Transverse colon (tissue), 4 donors: ENCODE measurements at regions of chr7 and their contacts with region 1.

Region 1: GRCh38 chr7:147510923-147511322 is 1079.6 kb upstream of the C7orf33 start:
- DNase-seq: no peak
- H3K4me3 ChIP-seq: no peak overlapping the region
- H3K27ac ChIP-seq: no peak overlapping the region
- H3K4me1 ChIP-seq: no peaks in the 10 kb centered on the region
- H3K27me3 ChIP-seq: no peaks in the 10 kb centered on the region
- CTCF ChIP-seq: no peak
- EP300 ChIP-seq: no peak
- POLR2A ChIP-seq: no peak

Region 2: GRCh38 chr7:147207988-147208387 is 302.9 kb before region 1 on chr7:
- in situ Hi-C with region 1: no loop called
- intact Hi-C with region 1: no loop called
- DNase-seq: no peak
- H3K4me3 ChIP-seq: no peak overlapping the region
- H3K27ac ChIP-seq: no peak overlapping the region
- H3K4me1 ChIP-seq: no peaks in the 10 kb centered on the region
- H3K27me3 ChIP-seq: no peaks in the 10 kb centered on the region
- CTCF ChIP-seq: no peak
- EP300 ChIP-seq: no peak
- POLR2A ChIP-seq: no peak

Region 3: DNA sequence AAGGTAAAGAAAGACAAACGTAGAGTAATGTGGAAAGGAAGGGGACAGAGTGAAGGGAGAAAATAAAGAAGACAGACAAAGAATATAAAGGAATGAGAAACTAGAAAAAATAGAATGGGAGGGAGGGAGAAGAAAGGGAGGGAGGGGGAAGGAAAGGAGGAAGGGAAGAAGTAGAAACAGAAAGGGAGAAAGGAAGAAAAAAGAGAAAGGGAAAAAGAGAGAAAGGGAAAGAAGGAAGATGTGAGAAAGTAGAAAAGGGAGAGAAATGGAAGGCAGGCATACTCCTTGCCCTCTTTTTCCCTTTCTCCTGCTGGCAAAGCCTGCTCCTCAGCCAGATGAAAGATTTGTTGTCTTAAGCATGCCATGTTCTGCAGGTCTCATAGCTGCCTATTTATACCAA is 58.1 kb before region 1 on chr7:
- in situ Hi-C with region 1: loop called in 1 of 4 experiments (anchors 10 kb)
- intact Hi-C with region 1: no loop called
- DNase-seq: no peak
- H3K4me3 ChIP-seq: no peak overlapping the region
- H3K27ac ChIP-seq: no peak overlapping the region
- H3K4me1 ChIP-seq: no peaks in the 10 kb centered on the region
- H3K27me3 ChIP-seq: no peaks in the 10 kb centered on the region
- CTCF ChIP-seq: no peak
- EP300 ChIP-seq: no peak
- POLR2A ChIP-seq: no peak

Region 4: DNA sequence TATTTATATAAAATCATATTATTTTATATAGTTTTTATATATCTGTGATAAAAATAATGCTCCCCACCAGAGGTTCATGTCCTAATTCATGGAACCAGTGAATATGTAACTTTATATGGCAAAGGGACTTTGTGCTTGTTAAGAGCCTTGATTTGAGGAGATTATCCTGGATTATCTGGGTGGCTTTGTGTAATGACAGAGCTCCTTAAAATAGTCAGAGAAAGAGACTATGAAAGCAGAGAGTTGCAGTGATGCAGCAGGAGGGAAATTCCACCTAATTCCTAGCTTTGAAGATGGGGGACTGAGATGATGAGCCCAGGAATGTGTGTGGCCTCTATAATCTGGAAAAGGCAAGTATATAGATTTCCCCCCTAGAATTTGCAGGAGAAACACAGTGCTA is 45.4 kb after region 1 on chr7:
- in situ Hi-C with region 1: no loop called
- intact Hi-C with region 1: no loop called
- DNase-seq: no peak
- H3K4me3 ChIP-seq: no peak overlapping the region
- H3K27ac ChIP-seq: no peak overlapping the region
- H3K4me1 ChIP-seq: no peaks in the 10 kb centered on the region
- H3K27me3 ChIP-seq: no peaks in the 10 kb centered on the region
- CTCF ChIP-seq: no peak
- EP300 ChIP-seq: no peak
- POLR2A ChIP-seq: no peak

Region 5: GRCh38 chr7:147607151-147607800 is 96.4 kb after region 1 on chr7:
- in situ Hi-C with region 1: no loop called
- intact Hi-C with region 1: no loop called
- DNase-seq: no peak
- H3K4me3 ChIP-seq: no peak overlapping the region
- H3K27ac ChIP-seq: no peak overlapping the region
- H3K4me1 ChIP-seq: no peaks in the 10 kb centered on the region
- H3K27me3 ChIP-seq: no peaks in the 10 kb centered on the region
- CTCF ChIP-seq: no peak
- EP300 ChIP-seq: no peak
- POLR2A ChIP-seq: no peak

Region 6: GRCh38 chr7:148276314-148277041 is 765.6 kb after region 1 on chr7:
- in situ Hi-C with region 1: no loop called
- intact Hi-C with region 1: no loop called
- DNase-seq: no peak
- H3K4me3 ChIP-seq: no peak overlapping the region
- H3K27ac ChIP-seq: no peak overlapping the region
- H3K4me1 ChIP-seq: no peaks in the 10 kb centered on the region
- H3K27me3 ChIP-seq: no peaks in the 10 kb centered on the region
- CTCF ChIP-seq: no peak
- EP300 ChIP-seq: no peak
- POLR2A ChIP-seq: no peak